PC-9 (cell line): ENCODE measurements at regions of chr4 and their contacts with region 1.

Region 1: GRCh38 chr4:128338634-128339355 is 51.2 kb upstream of the PGRMC2 start:
- DNase-seq: peak; percentile 50 to 86
- H3K4me3 ChIP-seq: no peak overlapping the region
- H3K27ac ChIP-seq: peak overlapping the region; percentile 57
- H3K4me1 ChIP-seq: peaks cover 25% of the 10 kb centered on the region
- H3K27me3 ChIP-seq: no peaks in the 10 kb centered on the region
- CTCF ChIP-seq: no peak

Region 2: DNA sequence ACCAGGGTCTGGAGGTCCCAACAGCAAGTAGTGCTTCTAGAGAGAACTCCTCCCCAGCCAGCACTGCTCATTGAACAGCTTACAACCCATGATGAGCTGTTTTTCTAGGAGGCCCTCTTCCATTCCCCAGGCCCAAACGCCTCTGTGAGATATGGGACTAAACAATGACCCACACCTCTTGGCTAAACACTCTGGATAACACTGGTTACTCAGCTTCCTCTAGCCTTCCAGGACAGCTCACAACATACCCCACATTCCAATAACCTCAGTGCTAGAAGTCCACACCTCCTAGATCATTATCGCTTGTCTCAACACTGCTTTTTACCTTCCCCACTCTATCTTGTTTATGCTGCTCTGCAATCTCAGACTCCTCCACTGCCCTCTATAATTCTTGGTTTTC is 15.8 kb before region 1 on chr4:
- CTCF ChIA-PET with region 1: interaction called, 9 read pairs
- POLR2A ChIA-PET with region 1: interaction called, 28 read pairs
- intact Hi-C with region 1: loop called (anchors 1 kb)
- DNase-seq: peak; percentile 68 to 91
- H3K4me3 ChIP-seq: peak overlapping the region; percentile 33; the same call in 1 of the 2 replicates
- H3K27ac ChIP-seq: peak overlapping the region; percentile 89
- H3K4me1 ChIP-seq: peaks cover 40% of the 10 kb centered on the region
- H3K27me3 ChIP-seq: no peaks in the 10 kb centered on the region
- CTCF ChIP-seq: no peak

Region 3: DNA sequence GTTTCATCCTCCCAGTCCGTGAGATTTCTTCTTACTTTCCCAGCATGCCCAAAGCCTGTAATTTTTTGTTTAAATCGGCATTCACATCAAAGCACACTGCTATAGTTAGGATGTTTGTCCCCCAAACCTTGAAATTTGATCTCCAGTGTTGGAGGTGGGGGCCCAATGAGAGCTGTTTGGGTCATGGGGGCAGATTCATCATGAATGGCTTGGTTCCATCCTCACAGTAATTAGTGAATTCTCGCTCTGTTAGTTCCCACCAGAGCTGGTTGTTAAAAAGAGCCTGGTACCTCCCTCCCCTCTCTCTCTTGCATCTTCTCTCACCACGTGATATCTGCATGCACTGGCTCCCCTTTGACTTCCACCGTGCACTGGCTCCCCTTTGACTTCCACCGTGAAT is 10.7 kb before region 1 on chr4:
- CTCF ChIA-PET with region 1: interaction called, 9 read pairs
- POLR2A ChIA-PET with region 1: interaction called, 28 read pairs
- intact Hi-C with region 1: loop called (anchors 1 kb)
- DNase-seq: no peak
- H3K4me3 ChIP-seq: no peak overlapping the region
- H3K27ac ChIP-seq: no peak overlapping the region
- H3K4me1 ChIP-seq: peaks cover 16% of the 10 kb centered on the region
- H3K27me3 ChIP-seq: no peaks in the 10 kb centered on the region
- CTCF ChIP-seq: no peak